Heart right ventricle (tissue), 16 donors: ENCODE measurements at regions of chr5 and their contacts with region 1.

Region 1: GRCh38 chr5:134813407-134813806 is 32.4 kb upstream of the C5orf24 start:
- DNase-seq: no peak
- ATAC-seq: no peak
- H3K4me3 ChIP-seq: no peak overlapping the region
- H3K27ac ChIP-seq: no peak overlapping the region
- H3K4me1 ChIP-seq: peaks cover 0 to 3% (median 0%) of the 10 kb centered on the region in 9 donors
- H3K27me3 ChIP-seq: no peaks in the 10 kb centered on the region
- CTCF ChIP-seq: no peak

Region 2: DNA sequence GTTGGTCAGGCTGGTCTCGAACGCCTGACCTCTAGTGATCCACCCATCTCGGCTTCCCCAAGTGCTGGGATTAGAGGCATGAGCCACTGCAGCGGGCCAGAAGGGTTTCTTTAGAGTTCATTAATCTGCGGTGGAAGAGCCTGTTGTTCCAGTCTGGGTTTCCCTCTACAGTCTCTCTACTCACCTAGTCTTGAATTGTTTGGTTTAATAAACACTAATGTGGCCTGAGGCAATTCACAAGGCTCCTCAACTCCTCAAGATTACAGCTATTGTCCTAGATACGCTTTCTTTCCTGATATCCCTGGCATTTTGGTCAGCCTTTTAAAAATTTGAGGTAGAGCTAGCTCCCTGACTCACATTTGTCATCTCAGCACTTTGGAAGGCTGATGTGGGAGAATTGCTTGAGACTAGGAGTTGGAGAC is 176.2 kb before region 1 on chr5:
- intact Hi-C with region 1: no loop called
- DNase-seq: no peak
- ATAC-seq: no peak
- H3K4me3 ChIP-seq: no peak overlapping the region
- H3K27ac ChIP-seq: no peak overlapping the region
- H3K4me1 ChIP-seq: peaks cover 0 to 7% (median under 1%) of the 10 kb centered on the region in 9 donors
- H3K27me3 ChIP-seq: no peaks in the 10 kb centered on the region
- CTCF ChIP-seq: no peak

Region 3: DNA sequence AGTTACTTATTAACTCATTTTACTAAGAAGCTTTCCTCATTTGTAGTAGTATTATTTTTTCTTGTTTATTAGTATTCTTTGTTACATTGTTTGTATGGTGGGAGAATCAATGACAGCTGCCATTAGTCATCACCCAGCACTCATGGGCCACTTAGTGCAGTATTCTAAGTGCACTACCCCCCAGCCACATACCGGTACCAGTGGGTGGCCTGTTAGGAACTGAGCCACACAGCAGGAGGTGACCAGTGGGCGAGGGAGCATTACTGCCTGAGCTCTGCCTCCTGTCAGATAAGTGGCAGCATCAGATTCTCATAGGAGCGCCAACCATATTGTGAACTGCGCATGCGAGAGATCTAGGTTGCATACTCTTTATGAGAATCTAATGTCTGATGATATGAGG is 99.3 kb before region 1 on chr5:
- intact Hi-C with region 1: loop called in 1 of 10 experiments (anchors 10 kb)
- DNase-seq: no peak
- ATAC-seq: no peak
- H3K4me3 ChIP-seq: no peak overlapping the region
- H3K27ac ChIP-seq: no peak overlapping the region
- H3K4me1 ChIP-seq: no peaks in the 10 kb centered on the region
- H3K27me3 ChIP-seq: no peaks in the 10 kb centered on the region
- CTCF ChIP-seq: no peak